ENCODE measurements at regions of chr17 and their contacts with region 1.

Region 1: DNA sequence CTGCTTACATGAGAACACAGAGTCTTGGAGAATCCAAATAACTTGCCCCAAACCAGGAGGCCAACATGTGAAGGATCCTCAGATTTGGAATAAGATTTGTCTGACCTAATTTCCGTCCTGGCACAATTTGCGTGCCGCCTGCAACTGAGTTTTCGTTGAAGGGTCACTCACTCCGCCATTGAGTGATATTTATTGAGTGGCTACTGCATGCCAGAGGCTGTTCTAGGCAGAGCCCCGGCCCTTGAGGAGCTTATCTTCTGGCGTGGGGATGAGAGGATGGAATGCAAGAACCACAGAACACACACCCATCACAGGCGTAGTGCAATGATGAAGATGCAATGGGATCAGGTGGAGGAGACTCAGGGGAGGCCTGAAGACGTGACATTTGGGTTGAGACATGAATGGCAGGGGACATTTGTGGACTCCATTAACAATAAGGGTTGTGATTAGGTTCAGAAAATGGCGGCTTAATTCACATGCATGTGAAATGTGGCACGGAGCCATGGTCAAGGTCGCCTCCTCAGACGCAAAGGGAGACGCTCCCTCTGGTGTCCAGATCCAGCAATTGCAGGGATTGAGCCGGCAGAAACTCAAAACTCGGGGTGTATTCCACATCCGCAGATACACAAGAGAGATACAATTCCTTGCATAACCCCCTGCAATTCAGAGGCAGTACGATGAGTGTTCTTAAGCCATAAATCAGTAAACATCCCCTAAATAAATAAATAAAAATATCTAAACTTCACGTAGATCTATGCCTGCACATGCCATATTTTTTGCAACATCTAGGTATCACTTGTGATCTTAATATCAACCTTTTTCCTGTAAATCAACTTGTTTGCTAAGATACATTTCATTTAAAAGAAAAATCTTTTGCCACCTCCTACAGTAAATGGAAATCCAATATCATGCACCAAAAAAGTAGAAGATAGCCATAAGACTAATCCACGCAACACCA is 57.9 kb upstream of the CACNG4 start:
- DNase-seq: peak; percentile 78
- H3K4me3 ChIP-seq: no peak overlapping the region
- H3K27ac ChIP-seq: no peak overlapping the region
- H3K4me1 ChIP-seq: peaks cover 5% of the 10 kb centered on the region
- H3K27me3 ChIP-seq: no peaks in the 10 kb centered on the region
- CTCF ChIP-seq: peak; percentile 75 to 93 (median 90)
- POLR2A ChIP-seq: no peak

Region 2: GRCh38 chr17:66200685-66201092 is 705.9 kb before region 1 on chr17:
- intact Hi-C with region 1: loop called (anchors 10 kb)
- DNase-seq: peak; percentile 48
- H3K4me3 ChIP-seq: no peak overlapping the region
- H3K27ac ChIP-seq: no peak overlapping the region
- H3K4me1 ChIP-seq: no peaks in the 10 kb centered on the region
- H3K27me3 ChIP-seq: no peaks in the 10 kb centered on the region
- CTCF ChIP-seq: peak; percentile 14 to 60 (median 48)
- POLR2A ChIP-seq: no peak

Region 3: DNA sequence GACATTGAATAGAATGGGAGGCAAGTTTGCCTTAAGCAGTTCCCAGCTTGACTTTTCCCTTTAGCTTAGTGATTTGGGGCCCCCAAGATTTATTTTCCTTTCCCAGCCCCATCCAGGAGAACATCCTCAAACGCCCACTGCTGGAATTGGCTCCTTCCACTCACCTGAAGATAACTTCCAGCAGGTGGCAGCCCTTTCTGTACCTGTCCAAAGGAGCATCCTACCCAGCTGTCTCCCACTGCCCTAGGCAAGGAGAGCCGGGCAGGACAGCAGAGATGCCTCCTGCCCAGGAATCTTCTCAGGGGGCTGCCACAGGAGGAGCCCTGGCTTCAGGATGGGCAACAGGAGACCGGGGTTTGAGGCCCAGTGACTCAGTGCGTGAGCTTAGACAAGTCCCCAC is 65.3 kb before region 1 on chr17:
- intact Hi-C with region 1: no loop called
- DNase-seq: no peak
- H3K4me3 ChIP-seq: no peak overlapping the region
- H3K27ac ChIP-seq: no peak overlapping the region
- H3K4me1 ChIP-seq: no peaks in the 10 kb centered on the region
- H3K27me3 ChIP-seq: peaks cover under 1% of the 10 kb centered on the region
- CTCF ChIP-seq: no peak
- POLR2A ChIP-seq: no peak